GM13976 (cell line): ENCODE measurements at regions of chr9 and their contacts with region 1.

Region 1: DNA sequence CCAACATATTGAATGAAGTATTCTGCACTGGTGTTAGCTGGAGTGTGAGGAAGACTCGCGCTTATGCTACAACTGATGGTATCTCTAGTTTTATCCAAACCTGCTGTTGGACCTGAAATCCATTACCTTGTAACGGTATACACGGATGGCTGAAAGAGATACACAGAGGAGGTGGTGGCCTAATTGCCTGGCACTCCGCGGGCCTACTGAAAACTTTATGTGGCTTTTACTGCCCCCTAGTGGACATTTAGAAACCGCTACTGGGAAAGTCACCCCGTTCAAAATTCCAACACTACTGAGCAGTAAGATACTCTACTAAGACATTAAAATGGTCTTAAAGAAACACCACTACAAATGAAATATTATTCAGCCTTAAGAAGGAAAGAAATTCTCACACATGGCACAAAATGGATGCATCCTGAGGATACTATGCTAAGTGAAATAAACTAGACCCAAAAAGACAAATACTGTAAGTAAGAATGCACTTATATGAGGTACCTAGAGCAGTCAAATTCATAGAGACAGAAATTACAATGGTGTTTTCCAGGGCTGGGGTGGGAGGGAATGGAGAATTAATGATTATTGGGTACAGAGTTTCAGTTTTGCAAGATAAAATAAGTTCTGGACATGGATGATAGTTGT is 100.4 kb downstream of the TTLL11 start:
- DNase-seq: peak; percentile 71
- CTCF ChIP-seq: peak; percentile 65

Region 2: DNA sequence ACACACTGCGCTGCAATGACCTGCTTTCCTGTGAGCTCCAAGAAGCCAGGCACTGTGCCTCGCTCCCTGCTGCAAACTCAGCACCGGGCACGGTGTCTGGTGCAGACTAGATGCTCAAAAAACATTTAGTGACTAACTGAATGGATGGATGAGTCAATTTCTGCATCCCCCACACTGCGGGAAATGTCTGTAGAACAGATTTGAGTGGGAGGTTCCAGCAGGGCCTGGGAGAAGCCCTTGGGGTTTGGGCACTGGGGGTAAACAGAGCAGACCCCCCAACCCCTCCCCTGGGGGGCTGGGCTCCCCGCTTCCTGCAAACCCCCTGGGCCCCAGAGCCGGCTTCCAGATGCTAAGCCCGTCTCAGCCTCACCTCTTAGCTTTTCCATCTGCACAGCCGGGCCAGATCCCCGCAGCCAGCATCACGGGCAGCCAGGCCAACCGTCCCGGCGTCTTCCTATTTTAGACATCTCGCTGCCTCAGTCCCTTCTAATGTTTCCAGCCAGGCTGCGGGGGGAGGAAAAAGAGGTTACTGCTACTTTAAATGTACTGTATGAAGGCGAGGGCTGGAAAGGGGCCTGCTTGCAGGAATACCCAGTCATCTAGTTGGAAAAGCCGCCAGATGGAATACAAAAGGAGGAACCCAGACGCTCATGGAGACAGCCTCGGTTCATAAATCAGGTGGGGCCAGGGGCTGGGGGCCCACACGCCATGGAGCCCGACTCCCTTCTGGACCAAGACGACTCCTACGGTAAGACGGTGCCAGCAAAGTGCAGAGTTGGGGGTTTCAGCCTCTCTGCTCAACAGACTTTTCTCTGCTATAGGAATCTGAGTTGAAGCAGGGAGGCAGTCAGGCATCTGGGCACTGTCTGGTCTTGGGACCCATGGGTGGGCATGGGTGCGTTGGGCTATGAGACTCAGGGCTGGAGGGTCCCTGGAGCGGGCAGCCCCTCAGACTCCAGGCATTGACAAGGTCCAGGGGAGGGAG is 425.9 kb before region 1 on chr9:
- in situ Hi-C with region 1: loop called (anchors 10 kb)
- DNase-seq: no peak
- CTCF ChIP-seq: no peak

Region 3: DNA sequence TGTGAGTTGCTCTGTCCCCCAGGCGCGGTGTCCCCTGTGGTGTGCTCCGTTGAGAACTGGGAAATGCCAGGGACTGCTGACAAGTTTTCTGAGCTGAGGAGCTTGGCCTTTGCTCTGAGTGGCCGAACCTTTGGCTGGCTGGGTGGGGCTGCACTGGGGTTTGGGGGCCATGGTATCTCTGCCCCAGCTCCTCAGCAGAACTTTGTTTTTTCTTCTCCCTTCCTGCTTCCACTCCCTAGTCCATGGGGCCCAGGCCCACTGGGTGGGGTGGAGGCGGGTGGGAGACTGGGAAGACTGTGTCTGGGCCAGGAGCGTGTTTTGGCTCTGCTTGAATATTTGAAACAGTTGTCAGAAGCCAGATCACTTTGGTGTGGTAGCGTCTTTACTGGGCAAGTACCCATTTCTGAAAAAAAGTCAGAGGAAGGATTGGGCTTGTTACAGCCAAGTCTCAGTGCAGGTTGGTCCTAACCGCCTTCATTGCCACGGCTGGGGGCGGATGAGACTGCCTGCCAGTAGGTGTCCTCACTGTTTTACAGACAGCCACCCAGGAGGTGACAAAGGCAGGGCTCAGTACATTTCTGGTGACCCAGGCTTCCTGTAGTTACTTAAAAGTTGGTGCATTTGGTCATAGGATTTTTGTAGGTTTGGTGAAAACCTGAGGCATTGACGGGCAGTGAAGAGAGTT is 248.5 kb before region 1 on chr9:
- in situ Hi-C with region 1: loop called (anchors 25 kb)
- DNase-seq: peak; percentile 81
- CTCF ChIP-seq: peak; percentile 31

Region 4: GRCh38 chr9:121783521-121784507 is 208.9 kb before region 1 on chr9:
- in situ Hi-C with region 1: no loop called
- DNase-seq: no peak
- CTCF ChIP-seq: no peak

Region 5: GRCh38 chr9:121807823-121808278 is 184.8 kb before region 1 on chr9:
- in situ Hi-C with region 1: no loop called
- DNase-seq: no peak
- CTCF ChIP-seq: no peak

Region 6: DNA sequence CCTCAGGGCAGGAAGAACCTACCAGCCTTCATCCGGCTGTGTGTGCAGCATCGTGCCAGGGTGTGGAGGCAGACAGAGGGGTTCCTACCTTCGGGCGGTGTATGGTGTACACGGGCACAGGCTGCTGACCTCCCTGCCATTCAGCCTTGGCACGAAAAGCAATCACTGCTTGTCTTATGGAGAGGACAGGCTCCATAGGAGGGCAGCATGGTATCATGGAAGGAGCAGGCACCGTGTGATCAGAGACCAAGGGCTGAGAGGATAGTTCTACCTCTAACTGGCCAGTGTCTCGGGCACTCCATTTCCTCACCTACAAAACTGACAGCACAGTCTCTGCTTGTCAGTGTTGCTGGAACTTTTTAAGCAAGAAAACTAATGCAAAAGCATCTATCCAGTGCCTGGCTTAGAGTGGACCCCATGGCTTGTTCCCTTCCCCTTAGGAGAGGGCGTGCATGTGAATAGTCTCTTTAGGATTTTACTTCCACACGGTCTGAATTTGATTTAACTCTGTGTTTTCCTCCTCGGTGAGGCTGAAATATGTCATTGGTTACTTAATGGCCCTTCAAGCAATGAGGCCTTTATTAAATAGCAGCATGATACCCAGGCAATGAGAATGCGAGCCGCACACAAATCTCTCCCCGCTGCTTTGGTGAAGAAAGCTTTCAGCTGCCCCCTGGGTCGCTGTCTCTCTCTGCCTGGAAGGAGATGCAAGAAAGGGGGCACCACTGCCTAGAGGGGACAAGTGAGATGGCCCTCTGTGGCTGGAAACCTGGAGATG is 78.2 kb after region 1 on chr9:
- in situ Hi-C with region 1: no loop called
- DNase-seq: no peak
- CTCF ChIP-seq: no peak